HEK293 (cell line): ENCODE measurements at regions of chr2 and their contacts with region 1.

Region 1: GRCh38 chr2:74491648-74492544 is 7.5 kb downstream of the LBX2 start:
- H3K4me3 ChIP-seq: no peak overlapping the region
- H3K27ac ChIP-seq: no peak overlapping the region
- H3K4me1 ChIP-seq: no peaks in the 10 kb centered on the region
- CTCF ChIP-seq: no peak

Region 2: GRCh38 chr2:74542978-74543377 is 51.1 kb after region 1 on chr2:
- CTCF ChIA-PET with region 1: interaction called, 10 read pairs
- POLR2A ChIA-PET with region 1: no interaction called
- H3K4me3 ChIP-seq: no peak overlapping the region
- H3K27ac ChIP-seq: no peak overlapping the region
- H3K4me1 ChIP-seq: no peaks in the 10 kb centered on the region
- CTCF ChIP-seq: no peak